Panc1 (cell line): ENCODE measurements at regions of chr5 and their contacts with region 1.

Region 1: GRCh38 chr5:130692770-130693169 is 472.3 kb downstream of the HINT1 start:
- DNase-seq: no peak
- ATAC-seq: no peak
- H3K4me3 ChIP-seq: no peak overlapping the region
- H3K27ac ChIP-seq: no peak overlapping the region
- H3K4me1 ChIP-seq: no peaks in the 10 kb centered on the region
- H3K27me3 ChIP-seq: 0 out of 2 replicates have a peak, but pooled peaks cover 2% of the 10 kb centered on the region
- CTCF ChIP-seq: no peak

Region 2: GRCh38 chr5:130295235-130295634 is 397.5 kb before region 1 on chr5:
- CTCF ChIA-PET with region 1: no interaction called
- POLR2A ChIA-PET with region 1: interaction called, 11 read pairs
- in situ Hi-C with region 1: no loop called
- intact Hi-C with region 1: no loop called
- DNase-seq: no peak
- ATAC-seq: no peak
- H3K4me3 ChIP-seq: no peak overlapping the region
- H3K27ac ChIP-seq: no peak overlapping the region
- H3K4me1 ChIP-seq: no peaks in the 10 kb centered on the region
- H3K27me3 ChIP-seq: no peaks in the 10 kb centered on the region
- CTCF ChIP-seq: no peak

Region 3: GRCh38 chr5:131524431-131524830 is 831.7 kb after region 1 on chr5:
- CTCF ChIA-PET with region 1: no interaction called
- POLR2A ChIA-PET with region 1: interaction called, 12 read pairs
- in situ Hi-C with region 1: no loop called
- intact Hi-C with region 1: no loop called
- DNase-seq: no peak
- ATAC-seq: no peak
- H3K4me3 ChIP-seq: no peak overlapping the region
- H3K27ac ChIP-seq: no peak overlapping the region
- H3K4me1 ChIP-seq: no peaks in the 10 kb centered on the region
- H3K27me3 ChIP-seq: no peaks in the 10 kb centered on the region
- CTCF ChIP-seq: no peak